Posterior vena cava (tissue), 2 donors: ENCODE measurements at regions of chr15 and their contacts with region 1.

Region 1: GRCh38 chr15:91981821-91982801 is 128.6 kb downstream of the SLCO3A1 start:
- DNase-seq: no peak

Region 2: GRCh38 chr15:91921188-91921842 is 60.8 kb before region 1 on chr15:
- intact Hi-C with region 1: no loop called
- DNase-seq: no peak

Region 3: DNA sequence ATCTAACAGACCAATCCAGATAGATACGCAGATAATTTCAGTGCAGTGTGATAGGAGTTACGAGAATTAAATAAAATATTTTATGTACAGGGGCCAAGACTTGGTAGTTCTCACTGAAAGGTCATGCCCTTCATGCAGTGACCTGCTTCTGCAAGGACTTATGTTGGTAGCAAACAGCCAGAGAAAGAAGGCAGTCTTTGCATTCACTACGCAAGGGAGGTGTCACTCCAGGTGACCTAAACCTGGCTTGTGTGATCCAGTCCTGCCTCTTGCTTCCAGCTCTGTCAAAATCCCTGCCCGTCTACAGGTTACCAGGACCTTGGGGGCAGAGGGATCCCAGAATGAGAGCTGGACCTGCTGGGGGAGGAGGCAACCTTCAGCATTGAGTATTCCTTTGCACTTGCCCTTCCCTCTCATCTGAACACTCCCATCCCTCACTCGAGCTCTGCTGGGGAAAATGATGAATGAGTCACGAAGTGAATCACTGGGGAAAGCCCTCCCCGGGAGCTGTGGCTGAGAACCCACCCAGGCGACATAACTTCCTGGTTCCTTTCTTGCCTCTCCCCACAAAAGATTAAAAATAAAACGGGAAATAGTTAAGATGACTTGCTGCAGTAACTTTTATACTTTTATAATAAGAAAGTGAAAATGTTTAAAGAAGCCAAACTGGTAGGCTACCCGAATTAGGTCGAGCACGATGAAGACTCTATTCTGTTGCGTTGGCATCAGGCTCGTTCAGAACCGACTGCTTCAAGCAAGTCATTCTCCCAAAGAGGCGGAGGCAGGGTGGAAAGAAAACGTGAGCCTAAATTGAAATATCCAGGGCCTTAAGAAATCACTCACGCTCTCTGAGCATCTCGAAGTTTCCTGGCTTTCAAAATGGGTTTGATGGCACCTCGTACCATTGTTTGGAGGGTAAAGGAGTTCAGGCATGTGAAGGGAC is 87.5 kb after region 1 on chr15:
- intact Hi-C with region 1: loop called in 1 of 2 experiments (anchors 10 kb)
- DNase-seq: peak; percentile 86